ENCODE measurements at regions of chrX and their contacts with region 1.

Region 1: DNA sequence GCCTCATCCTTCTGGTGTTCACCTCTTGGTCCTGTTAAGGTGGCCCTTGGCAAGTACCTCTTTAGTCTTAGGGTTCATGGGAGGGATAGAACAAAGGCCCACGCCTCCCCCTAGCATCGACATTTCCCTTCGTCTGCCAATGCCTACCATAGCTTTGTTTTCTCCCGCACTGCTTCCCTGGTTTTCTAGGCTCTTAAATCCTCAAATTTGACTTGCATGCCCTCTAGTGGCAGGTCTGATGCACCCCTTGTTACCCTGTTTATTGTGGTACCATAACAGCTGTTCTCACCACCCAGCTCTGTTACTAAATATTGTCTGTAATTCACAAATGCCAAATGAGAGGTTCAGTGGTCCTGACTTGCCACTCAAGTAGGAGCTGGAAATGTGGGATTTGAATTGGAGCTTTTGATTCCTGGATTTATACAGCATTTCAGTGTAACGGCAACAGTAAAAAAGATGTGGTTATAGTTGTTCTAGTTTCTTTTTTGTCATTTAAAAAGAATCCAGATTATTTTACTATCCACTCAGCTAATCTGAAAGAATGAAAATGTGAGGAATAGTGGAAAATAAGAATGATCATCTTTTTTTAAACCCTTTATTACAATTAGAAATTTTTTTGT is 100.1 kb downstream of the REPS2 start:
- DNase-seq: peak; percentile 60
- ATAC-seq: peak; percentile 57
- H3K4me3 Mint-ChIP-seq: no peak overlapping the region
- H3K27ac Mint-ChIP-seq: no peak overlapping the region
- H3K4me1 Mint-ChIP-seq: peaks cover 2% of the 10 kb centered on the region
- H3K27me3 Mint-ChIP-seq: no peaks in the 10 kb centered on the region

Region 2: GRCh38 chrX:16882702-16883486 is 163.7 kb before region 1 on chrX:
- CTCF ChIA-PET with region 1: interaction called, 38 read pairs
- POLR2A ChIA-PET with region 1: no interaction called
- intact Hi-C with region 1: loop called (anchors 1 kb)
- DNase-seq: peak; percentile 82
- ATAC-seq: peak; percentile 83
- H3K4me3 Mint-ChIP-seq: peak overlapping the region; percentile 69
- H3K27ac Mint-ChIP-seq: peak overlapping the region; percentile 86
- H3K4me1 Mint-ChIP-seq: no peaks in the 10 kb centered on the region
- H3K27me3 Mint-ChIP-seq: no peaks in the 10 kb centered on the region

Measured in activated CD4-positive, alpha-beta T cell treated with anti-CD3 and anti-CD28 coated beads for 36 hours (primary cell).